ENCODE measurements at regions of chr1 and their contacts with region 1.

Region 1: DNA sequence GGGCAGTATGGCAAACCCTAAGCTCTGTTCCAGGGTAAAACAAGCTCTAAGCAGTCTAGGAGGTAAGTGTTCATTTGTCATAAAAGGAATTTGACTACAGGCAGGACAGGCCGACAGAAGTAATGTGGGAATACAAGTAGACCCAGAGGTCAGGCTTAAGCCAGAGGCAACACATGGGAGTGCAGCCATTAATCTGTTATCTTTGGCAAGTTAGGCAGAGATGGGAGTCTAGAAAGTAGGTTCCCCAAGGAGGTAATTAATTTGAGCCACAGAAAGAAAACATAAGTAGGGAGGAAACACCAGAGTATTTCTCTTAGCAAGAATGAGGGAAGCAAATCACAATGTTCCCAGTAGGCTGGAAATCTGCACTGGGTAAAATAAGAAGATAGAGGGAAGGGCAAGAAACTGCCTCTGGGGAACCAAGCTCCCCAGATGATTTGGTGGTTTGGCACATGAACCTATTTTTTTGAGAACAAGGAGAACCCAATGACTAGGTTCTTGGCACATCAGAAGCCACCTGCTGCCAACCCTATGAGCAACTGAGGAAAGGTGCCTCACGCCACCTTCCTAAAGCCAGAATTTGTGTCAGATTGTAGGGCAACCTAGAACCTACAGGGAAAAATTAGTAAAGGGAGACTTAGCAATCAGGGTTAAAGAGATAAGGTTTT is 636.4 kb upstream of the PLXNA2 start:
- DNase-seq: no peak
- ATAC-seq: no peak
- H3K4me3 ChIP-seq: no peak overlapping the region
- H3K27ac ChIP-seq: no peak overlapping the region
- H3K4me1 ChIP-seq: no peaks in the 10 kb centered on the region
- H3K27me3 ChIP-seq: no peaks in the 10 kb centered on the region
- CTCF ChIP-seq: no peak
- EP300 ChIP-seq: no peak
- POLR2A ChIP-seq: no peak
- RAD21 ChIP-seq: no peak

Region 2: GRCh38 chr1:208691012-208691411 is 189.6 kb before region 1 on chr1:
- CTCF ChIA-PET with region 1: no interaction called
- POLR2A ChIA-PET with region 1: no interaction called
- RAD21 ChIA-PET with region 1: no interaction called
- SMC1A ChIA-PET with region 1: no interaction called
- in situ Hi-C with region 1: no loop called
- intact Hi-C with region 1: no loop called
- DNase-seq: no peak
- ATAC-seq: no peak
- H3K4me3 ChIP-seq: no peak overlapping the region
- H3K27ac ChIP-seq: no peak overlapping the region
- H3K4me1 ChIP-seq: no peaks in the 10 kb centered on the region
- H3K27me3 ChIP-seq: no peaks in the 10 kb centered on the region
- CTCF ChIP-seq: no peak
- EP300 ChIP-seq: no peak
- POLR2A ChIP-seq: no peak
- RAD21 ChIP-seq: no peak

Region 3: DNA sequence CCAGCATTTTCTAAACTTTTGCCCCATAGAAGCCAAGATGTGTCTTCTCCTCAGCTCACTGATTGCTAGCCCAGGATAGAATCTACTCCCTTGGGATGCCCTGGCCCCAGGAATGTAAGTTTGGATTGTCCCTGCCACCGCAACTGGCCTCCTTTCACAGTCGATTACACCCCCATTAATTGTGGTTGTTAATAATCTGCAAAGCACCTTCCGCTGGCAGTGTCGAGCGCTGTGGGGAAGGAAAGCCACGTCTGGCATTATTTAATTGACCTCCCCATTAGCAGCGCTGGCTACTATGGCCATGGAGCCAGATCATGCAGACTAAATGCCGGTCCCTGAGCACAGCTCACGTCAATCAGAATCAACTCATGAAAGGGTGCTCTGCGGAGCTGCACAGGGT is 39.1 kb before region 1 on chr1:
- CTCF ChIA-PET with region 1: no interaction called
- POLR2A ChIA-PET with region 1: no interaction called
- RAD21 ChIA-PET with region 1: no interaction called
- SMC1A ChIA-PET with region 1: no interaction called
- in situ Hi-C with region 1: no loop called
- intact Hi-C with region 1: no loop called
- DNase-seq: no peak
- ATAC-seq: no peak
- H3K4me3 ChIP-seq: no peak overlapping the region
- H3K27ac ChIP-seq: no peak overlapping the region
- H3K4me1 ChIP-seq: no peaks in the 10 kb centered on the region
- H3K27me3 ChIP-seq: no peaks in the 10 kb centered on the region; a peak in 2 of 4 replicates
- CTCF ChIP-seq: no peak
- EP300 ChIP-seq: no peak
- POLR2A ChIP-seq: no peak
- RAD21 ChIP-seq: no peak

Region 4: DNA sequence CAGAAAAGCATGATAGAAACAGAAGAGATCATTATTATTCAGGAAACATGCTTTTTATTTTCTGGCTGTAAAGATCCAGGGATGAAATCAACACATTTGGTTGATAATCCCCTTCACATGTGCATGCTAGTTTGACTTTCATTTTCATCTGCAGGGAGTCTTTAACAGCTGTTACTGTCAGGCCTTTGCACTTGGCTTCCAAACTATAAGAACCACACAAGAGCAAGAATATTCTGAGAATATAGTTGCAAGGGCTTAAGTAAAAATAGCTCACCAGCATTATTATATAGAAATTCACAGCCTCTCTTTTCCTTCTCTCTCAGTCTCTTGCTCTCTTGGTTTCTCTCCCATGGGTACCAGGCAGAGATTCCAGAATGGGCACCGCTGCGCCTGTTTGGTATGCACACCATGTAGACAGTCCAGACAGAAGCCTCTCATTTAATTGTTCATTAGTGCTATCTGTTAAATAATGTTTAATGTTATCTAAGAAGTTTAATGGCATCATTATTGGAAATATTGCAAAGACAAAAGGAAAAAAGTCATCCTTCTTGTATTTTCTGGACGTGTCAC is 14.1 kb before region 1 on chr1:
- CTCF ChIA-PET with region 1: no interaction called
- POLR2A ChIA-PET with region 1: no interaction called
- RAD21 ChIA-PET with region 1: no interaction called
- SMC1A ChIA-PET with region 1: no interaction called
- in situ Hi-C with region 1: no loop called
- intact Hi-C with region 1: no loop called
- DNase-seq: no peak
- ATAC-seq: no peak
- H3K4me3 ChIP-seq: no peak overlapping the region
- H3K27ac ChIP-seq: no peak overlapping the region
- H3K4me1 ChIP-seq: no peaks in the 10 kb centered on the region
- H3K27me3 ChIP-seq: no peaks in the 10 kb centered on the region
- CTCF ChIP-seq: no peak
- EP300 ChIP-seq: no peak
- POLR2A ChIP-seq: no peak
- RAD21 ChIP-seq: no peak

Region 5: GRCh38 chr1:208892147-208892546 is 11.6 kb after region 1 on chr1:
- CTCF ChIA-PET with region 1: no interaction called
- POLR2A ChIA-PET with region 1: no interaction called
- RAD21 ChIA-PET with region 1: no interaction called
- SMC1A ChIA-PET with region 1: no interaction called
- in situ Hi-C with region 1: no loop called
- intact Hi-C with region 1: no loop called
- DNase-seq: no peak
- ATAC-seq: no peak
- H3K4me3 ChIP-seq: no peak overlapping the region
- H3K27ac ChIP-seq: no peak overlapping the region
- H3K4me1 ChIP-seq: no peaks in the 10 kb centered on the region
- H3K27me3 ChIP-seq: no peaks in the 10 kb centered on the region
- CTCF ChIP-seq: no peak
- EP300 ChIP-seq: no peak
- POLR2A ChIP-seq: no peak
- RAD21 ChIP-seq: no peak

Region 6: DNA sequence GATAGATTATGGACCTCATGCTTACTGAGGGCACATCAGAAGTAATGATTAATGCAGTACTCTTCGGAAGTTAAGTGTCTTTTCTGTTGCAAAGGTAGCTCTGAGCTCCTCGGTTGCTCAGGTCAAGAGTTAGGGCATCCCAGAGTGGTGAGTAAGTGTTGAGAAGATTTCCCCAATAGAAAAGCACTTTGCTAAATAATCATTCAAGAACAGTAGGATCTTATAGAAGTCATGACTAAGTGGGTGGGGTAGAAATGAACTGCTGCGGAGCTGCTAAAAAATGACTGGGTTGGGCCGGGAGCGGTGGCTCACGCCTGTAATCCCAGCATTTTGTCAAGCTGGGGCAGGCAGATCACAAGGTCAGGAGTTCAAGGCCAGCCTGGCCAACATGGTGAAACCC is 54.4 kb after region 1 on chr1:
- CTCF ChIA-PET with region 1: no interaction called
- POLR2A ChIA-PET with region 1: no interaction called
- RAD21 ChIA-PET with region 1: no interaction called
- SMC1A ChIA-PET with region 1: no interaction called
- in situ Hi-C with region 1: no loop called
- intact Hi-C with region 1: loop called (anchors 5 kb)
- DNase-seq: no peak
- ATAC-seq: no peak
- H3K4me3 ChIP-seq: no peak overlapping the region
- H3K27ac ChIP-seq: no peak overlapping the region
- H3K4me1 ChIP-seq: no peaks in the 10 kb centered on the region
- H3K27me3 ChIP-seq: peaks cover 0 to 3% of the 10 kb centered on the region in 2 experiments; a peak in 1 of 4 replicates
- CTCF ChIP-seq: no peak
- EP300 ChIP-seq: no peak
- POLR2A ChIP-seq: no peak
- RAD21 ChIP-seq: no peak